ENCODE measurements at regions of chr22 and their contacts with region 1.

Region 1: GRCh38 chr22:36180038-36180880 is 19.7 kb upstream of the APOL3 start:
- DNase-seq: peak; percentile 63 to 85 (median 76)
- ATAC-seq: peak; percentile 99
- H3K4me3 ChIP-seq: no peak overlapping the region
- H3K4me3 Mint-ChIP-seq: no peak overlapping the region
- H3K27ac ChIP-seq: no peak overlapping the region
- H3K27ac Mint-ChIP-seq: peak overlapping the region in 1 of 9 donors; percentile 45
- H3K4me1 ChIP-seq: peaks cover 0 to 2% of the 10 kb centered on the region in 2 donors
- H3K4me1 Mint-ChIP-seq: peaks cover 0 to 4% (median 3%) of the 10 kb centered on the region in 7 donors
- H3K27me3 ChIP-seq: no peaks in the 10 kb centered on the region
- H3K27me3 Mint-ChIP-seq: peaks cover 0 to 20% (median 0%) of the 10 kb centered on the region in 5 donors

Region 2: GRCh38 chr22:36065775-36066559 is 114.3 kb before region 1 on chr22:
- CTCF ChIA-PET with region 1: interaction called, 10 read pairs
- POLR2A ChIA-PET with region 1: no interaction called
- intact Hi-C with region 1: loop called in 1 of 2 experiments (anchors 5 kb)
- DNase-seq: peak; percentile 35 to 80 (median 56)
- ATAC-seq: peak; percentile 88
- H3K4me3 ChIP-seq: peak overlapping the region; percentile 72
- H3K4me3 Mint-ChIP-seq: peak overlapping the region; percentile 80 to 92 (median 87)
- H3K27ac ChIP-seq: peak overlapping the region; percentile 21
- H3K27ac Mint-ChIP-seq: peak overlapping the region in 7 of 9 donors; percentile 14 to 89 (median 58)
- H3K4me1 ChIP-seq: peaks cover 6 to 8% of the 10 kb centered on the region in 2 donors
- H3K4me1 Mint-ChIP-seq: peaks cover 4 to 10% (median 8%) of the 10 kb centered on the region in 7 donors
- H3K27me3 ChIP-seq: no peaks in the 10 kb centered on the region
- H3K27me3 Mint-ChIP-seq: peaks cover 0 to 11% (median 0%) of the 10 kb centered on the region in 5 donors

Region 3: GRCh38 chr22:36144886-36145541 is 35.2 kb before region 1 on chr22:
- CTCF ChIA-PET with region 1: interaction called, 65 read pairs
- POLR2A ChIA-PET with region 1: no interaction called
- intact Hi-C with region 1: loop called (anchors 1 kb)
- DNase-seq: peak in 4 of 9 donors; percentile 27 to 45 (median 38)
- ATAC-seq: peak; percentile 77
- H3K4me3 ChIP-seq: no peak overlapping the region
- H3K4me3 Mint-ChIP-seq: no peak overlapping the region
- H3K27ac ChIP-seq: peak overlapping the region; percentile 29
- H3K27ac Mint-ChIP-seq: peak overlapping the region in 8 of 9 donors; percentile 12 to 84 (median 53)
- H3K4me1 ChIP-seq: peaks cover 4 to 5% of the 10 kb centered on the region in 2 donors
- H3K4me1 Mint-ChIP-seq: peaks cover 4 to 61% (median 36%) of the 10 kb centered on the region in 7 donors
- H3K27me3 ChIP-seq: no peaks in the 10 kb centered on the region
- H3K27me3 Mint-ChIP-seq: no peaks in the 10 kb centered on the region

Region 4: DNA sequence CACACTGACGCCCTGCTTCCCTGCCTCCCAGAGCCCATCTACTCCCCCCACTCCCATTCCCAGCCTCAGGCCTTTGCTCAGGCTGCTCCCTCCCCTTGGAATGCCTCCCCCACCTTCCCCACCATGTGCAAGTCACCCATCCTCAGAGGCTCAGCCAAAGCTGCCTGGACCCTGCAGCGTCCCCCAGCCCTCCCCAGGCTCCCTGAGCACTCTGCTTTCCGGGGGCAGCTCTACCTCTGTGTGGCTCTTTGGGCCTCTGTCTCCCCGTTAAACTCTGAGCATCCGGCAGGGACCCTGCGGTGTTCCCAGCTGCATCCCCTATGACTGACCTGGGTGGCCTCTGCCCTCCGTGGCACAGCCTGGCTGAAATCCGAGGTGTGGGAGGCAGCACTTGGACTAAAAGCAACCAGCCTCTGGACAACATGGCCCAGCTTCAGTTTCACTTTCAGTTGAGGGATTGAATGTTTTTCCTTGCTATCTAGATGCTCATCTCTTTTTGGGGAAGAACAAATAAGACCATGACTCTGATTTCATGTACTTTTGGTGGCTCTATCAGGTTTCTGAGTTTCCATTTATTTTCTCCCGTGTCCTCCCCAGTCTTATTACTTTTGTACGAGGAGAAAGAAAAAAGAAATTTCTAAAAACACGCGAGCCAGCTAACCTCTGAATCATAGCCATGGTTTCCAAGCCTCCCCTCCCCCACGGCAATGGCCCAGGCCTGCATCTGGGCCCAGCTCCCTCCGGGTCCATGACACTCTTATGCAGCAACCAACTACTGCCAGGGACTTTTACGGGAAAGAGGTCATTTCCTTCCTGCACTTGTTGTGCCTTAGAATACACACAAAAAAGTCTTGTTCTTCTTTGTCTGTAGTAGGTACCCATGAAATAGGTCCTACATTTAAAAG is 23.5 kb before region 1 on chr22:
- CTCF ChIA-PET with region 1: interaction called, 71 read pairs
- POLR2A ChIA-PET with region 1: interaction called, 7 read pairs
- intact Hi-C with region 1: loop called (anchors 1 kb)
- DNase-seq: peak; percentile 43 to 77 (median 59)
- ATAC-seq: peak; percentile 84
- H3K4me3 ChIP-seq: peak overlapping the region; percentile 59
- H3K4me3 Mint-ChIP-seq: peak overlapping the region; percentile 89 to 98 (median 97)
- H3K27ac ChIP-seq: peak overlapping the region; percentile 96
- H3K27ac Mint-ChIP-seq: peak overlapping the region; percentile 94 to 99 (median 98)
- H3K4me1 ChIP-seq: peaks cover 63 to 73% of the 10 kb centered on the region in 2 donors
- H3K4me1 Mint-ChIP-seq: peaks cover 75 to 99% (median 86%) of the 10 kb centered on the region in 7 donors
- H3K27me3 ChIP-seq: no peaks in the 10 kb centered on the region
- H3K27me3 Mint-ChIP-seq: no peaks in the 10 kb centered on the region